Activated B cell treated with CpG ODN at 0.5 μM for 24 hours (primary cell): ENCODE measurements at regions of chr18 and their contacts with region 1.

Region 1: DNA sequence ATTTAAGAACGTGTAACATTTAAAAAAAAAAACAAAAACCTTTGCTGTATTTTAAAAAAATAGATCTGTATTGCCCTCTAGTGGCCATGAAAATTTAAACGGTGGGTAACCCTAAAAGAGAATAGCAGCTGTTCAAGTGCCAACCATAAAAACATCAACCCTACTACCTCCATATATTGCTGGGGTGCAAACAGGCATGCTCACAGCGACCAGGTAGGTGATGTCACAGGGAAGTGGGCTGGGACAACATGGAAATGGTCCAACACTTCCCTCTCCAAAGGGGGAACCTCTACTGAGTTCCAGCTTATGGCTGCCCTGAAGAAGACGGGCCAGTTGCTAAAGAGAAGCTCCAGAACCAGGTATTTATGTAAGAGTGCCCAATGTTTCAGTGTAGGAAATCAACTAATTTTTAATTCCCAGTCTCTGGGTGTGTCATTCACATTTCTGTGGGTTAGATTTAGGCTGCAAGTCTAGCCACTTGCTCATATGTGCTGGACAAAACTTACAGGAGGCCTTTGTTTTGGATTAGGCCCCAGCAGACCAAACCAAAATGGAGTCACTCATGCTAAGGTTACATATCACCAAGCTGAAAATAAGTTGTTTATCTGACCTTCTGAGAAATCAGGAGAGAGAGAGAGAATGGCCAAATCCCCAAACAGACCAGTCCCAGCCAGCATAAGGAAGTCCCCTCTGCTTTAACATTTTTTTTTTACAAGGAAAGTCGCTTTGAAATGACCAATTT is 54.5 kb downstream of the SKA1 start:
- DNase-seq: no peak
- ATAC-seq: no peak
- H3K4me3 Mint-ChIP-seq: no peak overlapping the region
- H3K27ac Mint-ChIP-seq: no peak overlapping the region
- H3K4me1 Mint-ChIP-seq: no peaks in the 10 kb centered on the region
- H3K27me3 Mint-ChIP-seq: peaks cover 5% of the 10 kb centered on the region
- CTCF ChIP-seq: no peak

Region 2: GRCh38 chr18:48445540-48445939 is 1983.8 kb before region 1 on chr18:
- CTCF ChIA-PET with region 1: no interaction called
- POLR2A ChIA-PET with region 1: no interaction called
- intact Hi-C with region 1: loop called (anchors 5 kb)
- DNase-seq: peak; percentile 41
- ATAC-seq: peak; percentile 82
- H3K4me3 Mint-ChIP-seq: no peak overlapping the region
- H3K27ac Mint-ChIP-seq: no peak overlapping the region
- H3K4me1 Mint-ChIP-seq: peaks cover 2% of the 10 kb centered on the region
- H3K27me3 Mint-ChIP-seq: peaks cover 14% of the 10 kb centered on the region
- CTCF ChIP-seq: no peak

Region 3: GRCh38 chr18:49555641-49556040 is 873.7 kb before region 1 on chr18:
- CTCF ChIA-PET with region 1: interaction called, 4 read pairs
- POLR2A ChIA-PET with region 1: no interaction called
- intact Hi-C with region 1: loop called (anchors 5 kb)
- DNase-seq: no peak
- ATAC-seq: no peak
- H3K4me3 Mint-ChIP-seq: no peak overlapping the region
- H3K27ac Mint-ChIP-seq: no peak overlapping the region
- H3K4me1 Mint-ChIP-seq: peaks cover 4% of the 10 kb centered on the region
- H3K27me3 Mint-ChIP-seq: peaks cover 47% of the 10 kb centered on the region
- CTCF ChIP-seq: no peak

Region 4: DNA sequence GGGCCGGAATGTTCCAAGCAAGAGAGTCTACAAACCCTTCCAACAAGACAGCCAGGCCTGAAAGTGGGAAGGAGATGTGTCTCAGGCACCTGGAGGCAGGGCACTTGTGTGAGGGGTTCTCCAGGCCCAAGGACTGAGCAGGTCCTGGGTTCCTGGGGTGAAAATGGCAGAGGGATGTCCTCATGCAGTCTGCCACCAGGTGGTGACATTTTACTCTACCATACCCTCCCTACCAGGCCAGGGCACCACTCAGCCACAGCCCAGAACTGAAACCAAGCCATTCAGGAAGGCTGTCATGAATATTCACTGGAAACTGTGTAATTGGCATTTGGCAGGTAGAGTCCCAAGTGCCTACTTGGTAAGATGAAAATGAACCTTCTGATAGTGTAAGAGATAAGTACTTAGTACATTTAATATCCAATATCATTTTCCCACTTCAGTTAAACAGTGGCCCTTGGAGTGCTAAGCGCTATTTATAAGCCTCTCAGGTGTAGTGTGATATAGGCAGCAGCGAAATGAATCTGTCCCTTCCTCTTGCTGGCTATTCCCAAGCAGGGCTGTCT is 419.5 kb before region 1 on chr18:
- CTCF ChIA-PET with region 1: interaction called, 5 read pairs
- POLR2A ChIA-PET with region 1: no interaction called
- intact Hi-C with region 1: loop called (anchors 1 kb)
- DNase-seq: no peak
- ATAC-seq: peak; percentile 79
- H3K4me3 Mint-ChIP-seq: no peak overlapping the region
- H3K27ac Mint-ChIP-seq: no peak overlapping the region
- H3K4me1 Mint-ChIP-seq: no peaks in the 10 kb centered on the region
- H3K27me3 Mint-ChIP-seq: peaks cover 4% of the 10 kb centered on the region
- CTCF ChIP-seq: no peak

Region 5: DNA sequence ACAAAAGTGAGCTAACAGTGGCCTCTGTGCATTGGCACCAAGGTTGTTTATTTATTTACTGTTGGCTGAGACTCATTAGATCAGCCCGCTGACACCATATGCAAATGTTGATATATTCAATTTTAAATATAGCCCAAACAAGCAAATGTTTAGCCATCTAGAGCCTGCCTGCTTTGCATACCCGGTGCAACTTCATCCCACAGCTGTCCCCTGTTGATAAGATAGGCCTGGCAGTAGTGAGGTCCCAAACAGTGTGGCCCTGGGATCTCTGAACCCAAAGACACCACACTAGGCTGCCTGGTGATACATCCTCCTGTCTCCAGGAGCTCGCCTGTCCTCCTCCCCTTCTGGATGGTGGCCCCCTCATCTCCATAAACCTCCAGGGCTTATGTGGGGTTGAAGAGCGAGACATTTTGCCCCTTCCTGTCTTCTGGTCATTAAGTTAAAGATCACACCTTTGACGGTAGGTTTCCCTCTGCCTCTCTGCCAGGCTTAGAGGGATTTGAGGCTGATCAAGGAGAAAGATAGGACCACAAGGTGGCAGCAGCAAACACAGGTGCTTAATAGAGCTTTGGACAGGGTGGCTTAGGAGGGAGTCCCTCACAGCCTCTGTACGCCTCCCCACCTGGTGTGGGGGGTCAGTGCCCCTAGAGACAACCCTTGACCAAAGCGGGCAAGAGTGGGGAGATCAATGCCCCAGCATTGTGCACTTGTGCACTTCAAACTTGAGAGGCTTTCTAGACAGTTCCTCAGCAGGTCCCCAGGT is 210.8 kb before region 1 on chr18:
- CTCF ChIA-PET with region 1: interaction called, 4 read pairs
- POLR2A ChIA-PET with region 1: no interaction called
- intact Hi-C with region 1: loop called (anchors 1 kb)
- DNase-seq: peak; percentile 16
- ATAC-seq: peak; percentile 60
- H3K4me3 Mint-ChIP-seq: no peak overlapping the region
- H3K27ac Mint-ChIP-seq: no peak overlapping the region
- H3K4me1 Mint-ChIP-seq: peaks cover 4% of the 10 kb centered on the region
- H3K27me3 Mint-ChIP-seq: peaks cover 25% of the 10 kb centered on the region
- CTCF ChIP-seq: no peak

Region 6: GRCh38 chr18:51128533-51128932 is 699.2 kb after region 1 on chr18:
- CTCF ChIA-PET with region 1: no interaction called
- POLR2A ChIA-PET with region 1: no interaction called
- intact Hi-C with region 1: no loop called
- DNase-seq: no peak
- ATAC-seq: no peak
- H3K4me3 Mint-ChIP-seq: no peak overlapping the region
- H3K27ac Mint-ChIP-seq: no peak overlapping the region
- H3K4me1 Mint-ChIP-seq: no peaks in the 10 kb centered on the region
- H3K27me3 Mint-ChIP-seq: no peaks in the 10 kb centered on the region
- CTCF ChIP-seq: no peak